ENCODE measurements at regions of chr4 and their contacts with region 1.

Region 1: DNA sequence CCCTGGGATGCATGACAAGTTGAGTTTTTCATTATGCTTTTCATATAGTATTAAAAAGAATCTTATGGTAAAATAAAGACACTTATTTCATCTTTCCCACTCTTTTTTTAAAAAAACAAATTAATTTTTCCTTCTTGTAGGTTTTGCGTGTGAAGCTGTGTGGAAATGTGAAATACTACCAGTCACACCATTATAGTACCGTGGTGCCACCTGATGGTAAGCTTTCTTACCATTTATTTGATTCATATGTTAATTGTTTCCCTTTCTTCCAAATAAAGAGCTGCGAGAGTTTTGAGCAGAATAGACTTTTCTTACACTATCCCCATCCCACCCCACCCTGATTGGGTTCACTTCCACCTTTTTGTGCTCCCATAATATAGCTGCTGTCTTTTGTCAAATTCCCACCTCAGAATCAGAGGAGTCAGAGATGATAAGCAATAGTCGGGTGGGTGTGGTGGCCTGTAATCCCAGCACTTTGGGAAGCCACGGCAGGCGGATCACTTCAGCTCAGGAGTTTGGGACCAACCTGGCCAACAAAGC is 44.3 kb downstream of the CASP6 start:
- DNase-seq: peak; percentile 29 to 60 (median 57)
- H3K4me3 ChIP-seq: no peak overlapping the region
- H3K27ac ChIP-seq: no peak overlapping the region
- H3K4me1 ChIP-seq: no peaks in the 10 kb centered on the region
- H3K27me3 ChIP-seq: no peaks in the 10 kb centered on the region

Region 2: GRCh38 chr4:109424093-109424841 is 234.7 kb before region 1 on chr4:
- CTCF ChIA-PET with region 1: interaction called, 37 read pairs
- POLR2A ChIA-PET with region 1: no interaction called
- DNase-seq: no peak
- H3K4me3 ChIP-seq: no peak overlapping the region
- H3K27ac ChIP-seq: no peak overlapping the region
- H3K4me1 ChIP-seq: peaks cover 0 to 2% (median 0%) of the 10 kb centered on the region in 4 experiments
- H3K27me3 ChIP-seq: no peaks in the 10 kb centered on the region

Measured in common myeloid progenitor, CD34-positive (primary cell).